ENCODE measurements at regions of chr15 and their contacts with region 1.

Region 1: GRCh38 chr15:83066734-83067637 is at the start of gene BTBD1:
- DNase-seq: peak; percentile 93
- ATAC-seq: peak; percentile 87
- H3K4me3 Mint-ChIP-seq: peak within 1 kb of the TSS; percentile 69
- H3K27ac Mint-ChIP-seq: peak within 1 kb of the TSS; percentile 77
- H3K4me1 Mint-ChIP-seq: peaks cover 14% of the 10 kb centered on the region
- H3K27me3 Mint-ChIP-seq: no peaks in the 10 kb centered on the region
- total RNA-seq, gene BTBD1: 56.3 to 59.2 TPM

Region 2: DNA sequence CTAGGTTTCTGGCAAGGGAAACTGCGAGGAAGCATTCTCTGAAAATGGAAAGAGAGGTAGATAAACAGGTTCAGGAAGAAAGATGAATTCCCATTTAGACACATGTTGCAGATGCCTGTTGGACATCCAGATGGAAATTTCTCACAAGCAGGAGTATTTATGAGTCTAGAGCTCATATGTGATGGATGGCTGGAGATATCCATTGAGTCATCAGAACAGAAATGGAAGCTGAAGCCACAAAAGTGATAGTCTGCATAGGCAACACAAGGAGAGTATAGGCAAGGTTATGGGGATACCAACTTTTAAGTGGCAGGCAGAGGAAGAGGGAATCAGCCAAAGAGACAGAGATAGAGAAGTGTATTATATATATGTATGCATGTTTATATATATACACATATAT is 87.3 kb before region 1 on chr15:
- POLR2A ChIA-PET with region 1: no interaction called
- DNase-seq: no peak
- ATAC-seq: no peak
- H3K4me3 Mint-ChIP-seq: no peak overlapping the region
- H3K27ac Mint-ChIP-seq: no peak overlapping the region
- H3K4me1 Mint-ChIP-seq: peaks cover 9% of the 10 kb centered on the region
- H3K27me3 Mint-ChIP-seq: no peaks in the 10 kb centered on the region

Region 3: GRCh38 chr15:83046558-83047127 is 20.3 kb before region 1 on chr15:
- POLR2A ChIA-PET with region 1: no interaction called
- DNase-seq: no peak
- ATAC-seq: no peak
- H3K4me3 Mint-ChIP-seq: no peak overlapping the region
- H3K27ac Mint-ChIP-seq: no peak overlapping the region
- H3K4me1 Mint-ChIP-seq: peaks cover 4% of the 10 kb centered on the region
- H3K27me3 Mint-ChIP-seq: no peaks in the 10 kb centered on the region

Region 4: DNA sequence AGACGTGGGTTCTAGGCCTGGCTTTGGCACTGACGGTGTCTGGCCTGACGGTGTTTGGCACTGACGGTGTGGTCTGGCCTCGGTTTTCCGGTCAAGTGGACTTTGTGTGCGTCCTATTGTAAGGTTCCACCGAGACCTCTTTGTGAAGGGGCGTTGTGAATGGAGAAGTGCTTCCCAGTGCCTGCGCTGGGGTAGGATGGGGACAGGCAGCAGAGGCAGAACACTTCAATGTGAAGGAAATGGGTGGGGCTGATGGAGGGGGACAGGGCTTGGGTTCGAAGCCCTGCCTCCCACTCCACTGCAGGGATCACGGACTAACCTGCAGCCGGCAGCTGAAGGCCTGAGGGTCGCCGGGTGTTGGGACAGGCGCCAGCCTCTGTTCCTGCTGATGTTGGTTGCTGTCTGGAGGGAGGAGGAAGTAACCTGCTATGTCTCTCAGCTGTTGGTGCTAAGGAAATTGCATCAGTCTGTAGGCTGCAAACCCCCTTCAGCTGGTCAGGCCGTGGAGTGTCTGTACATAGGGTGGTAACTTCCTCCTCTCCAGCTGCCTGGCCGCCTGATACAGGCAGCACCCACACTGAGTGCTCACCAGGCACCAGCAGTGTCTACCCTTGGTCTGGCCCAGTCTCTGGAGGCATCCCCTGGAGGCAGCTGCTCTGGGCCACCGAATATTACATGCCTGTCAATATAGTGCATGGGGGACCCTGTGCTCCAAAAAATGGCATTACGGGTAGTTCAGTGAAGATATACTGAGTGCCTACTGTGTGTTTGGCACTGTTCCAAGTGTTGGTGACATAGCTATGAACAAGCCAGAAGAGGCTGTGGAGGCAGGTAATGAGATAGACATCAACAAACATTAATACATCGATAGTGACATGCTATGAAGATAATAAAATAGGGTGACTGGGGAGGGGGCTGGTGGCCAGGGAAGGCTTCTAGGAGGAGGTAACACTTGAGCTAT is 41.6 kb after region 1 on chr15:
- POLR2A ChIA-PET with region 1: interaction called, 36 read pairs
- DNase-seq: peak; percentile 63
- ATAC-seq: peak; percentile 82
- H3K4me3 Mint-ChIP-seq: peak overlapping the region; percentile 94
- H3K27ac Mint-ChIP-seq: peak overlapping the region; percentile 90
- H3K4me1 Mint-ChIP-seq: peaks cover 41% of the 10 kb centered on the region
- H3K27me3 Mint-ChIP-seq: peaks cover 10% of the 10 kb centered on the region

Region 5: GRCh38 chr15:83155942-83156341 is 89.0 kb after region 1 on chr15:
- POLR2A ChIA-PET with region 1: no interaction called
- DNase-seq: no peak
- ATAC-seq: no peak
- H3K4me3 Mint-ChIP-seq: no peak overlapping the region
- H3K27ac Mint-ChIP-seq: peak overlapping the region; percentile 13
- H3K4me1 Mint-ChIP-seq: peaks cover 6% of the 10 kb centered on the region
- H3K27me3 Mint-ChIP-seq: peaks cover 4% of the 10 kb centered on the region

Measured in activated naive CD8-positive, alpha-beta T cell treated with anti-CD3 and anti-CD28 coated beads, Interleukin-2, amount 10 ng/mL, durations not matched to agents 7 days and 5 days (primary cell).